ENCODE measurements at regions of chr12 and their contacts with region 1.

Region 1: GRCh38 chr12:95217377-95218149 is at the starts of genes FGD6 and VEZT:
- DNase-seq: peak; percentile 98
- ATAC-seq: peak; percentile 91
- H3K4me3 ChIP-seq: peak within 1 kb of the TSS; percentile 98
- H3K27ac ChIP-seq: peak within 1 kb of the TSS; percentile 86
- H3K4me1 ChIP-seq: no peaks in the 10 kb centered on the region
- H3K27me3 ChIP-seq: no peaks in the 10 kb centered on the region
- CTCF ChIP-seq: peak; percentile 52 to 73 (median 53); a peak in 5 of 6 replicates
- EP300 ChIP-seq: no peak
- POLR2A ChIP-seq: peak; percentile 89
- RAD21 ChIP-seq: peak; percentile 70
- polyA plus RNA-seq, gene FGD6: 2.4 to 3.3 TPM
- polyA plus RNA-seq, gene VEZT: 32.8 to 35.6 TPM

Region 2: GRCh38 chr12:95072900-95073697 is 144.5 kb before region 1 on chr12 and contains the start of gene NR2C1:
- CTCF ChIA-PET with region 1: no interaction called
- POLR2A ChIA-PET with region 1: interaction called, 4 read pairs
- RAD21 ChIA-PET with region 1: interaction called, 7 read pairs
- SMC1A ChIA-PET with region 1: interaction called, 3 read pairs
- in situ Hi-C with region 1: no loop called
- intact Hi-C with region 1: loop called (anchors 5 kb)
- DNase-seq: peak; percentile 63
- ATAC-seq: peak; percentile 98
- H3K4me3 ChIP-seq: peak within 1 kb of the TSS; percentile 88
- H3K27ac ChIP-seq: peak within 1 kb of the TSS; percentile 72
- H3K4me1 ChIP-seq: 0 out of 2 replicates have a peak, but pooled peaks cover 3% of the 10 kb centered on the region
- H3K27me3 ChIP-seq: no peaks in the 10 kb centered on the region
- CTCF ChIP-seq: no peak; a peak in 1 of 6 replicates
- EP300 ChIP-seq: no peak
- POLR2A ChIP-seq: peak; percentile 61
- RAD21 ChIP-seq: no peak
- polyA plus RNA-seq, gene NR2C1: 8.8 to 19.4 TPM

Region 3: GRCh38 chr12:95147866-95148265 is 69.7 kb before region 1 on chr12:
- CTCF ChIA-PET with region 1: interaction called, 6 read pairs
- POLR2A ChIA-PET with region 1: interaction called, 7 read pairs
- RAD21 ChIA-PET with region 1: interaction called, 12 read pairs
- SMC1A ChIA-PET with region 1: interaction called, 3 read pairs
- in situ Hi-C with region 1: no loop called
- intact Hi-C with region 1: no loop called
- DNase-seq: no peak
- ATAC-seq: peak; percentile 70
- H3K4me3 ChIP-seq: no peak overlapping the region
- H3K27ac ChIP-seq: no peak overlapping the region
- H3K4me1 ChIP-seq: no peaks in the 10 kb centered on the region
- H3K27me3 ChIP-seq: no peaks in the 10 kb centered on the region
- CTCF ChIP-seq: no peak
- EP300 ChIP-seq: no peak
- POLR2A ChIP-seq: no peak
- RAD21 ChIP-seq: no peak

Region 4: GRCh38 chr12:95231190-95231589 is 13.6 kb after region 1 on chr12:
- CTCF ChIA-PET with region 1: interaction called, 10 read pairs
- POLR2A ChIA-PET with region 1: interaction called, 5 read pairs
- RAD21 ChIA-PET with region 1: no interaction called
- SMC1A ChIA-PET with region 1: interaction called, 8 read pairs
- in situ Hi-C with region 1: no loop called
- intact Hi-C with region 1: no loop called
- DNase-seq: no peak
- ATAC-seq: peak; percentile 34; the same call in 1 of the 3 replicates
- H3K4me3 ChIP-seq: no peak overlapping the region
- H3K27ac ChIP-seq: no peak overlapping the region
- H3K4me1 ChIP-seq: no peaks in the 10 kb centered on the region
- H3K27me3 ChIP-seq: no peaks in the 10 kb centered on the region
- CTCF ChIP-seq: no peak
- EP300 ChIP-seq: no peak
- POLR2A ChIP-seq: no peak
- RAD21 ChIP-seq: no peak

Region 5: DNA sequence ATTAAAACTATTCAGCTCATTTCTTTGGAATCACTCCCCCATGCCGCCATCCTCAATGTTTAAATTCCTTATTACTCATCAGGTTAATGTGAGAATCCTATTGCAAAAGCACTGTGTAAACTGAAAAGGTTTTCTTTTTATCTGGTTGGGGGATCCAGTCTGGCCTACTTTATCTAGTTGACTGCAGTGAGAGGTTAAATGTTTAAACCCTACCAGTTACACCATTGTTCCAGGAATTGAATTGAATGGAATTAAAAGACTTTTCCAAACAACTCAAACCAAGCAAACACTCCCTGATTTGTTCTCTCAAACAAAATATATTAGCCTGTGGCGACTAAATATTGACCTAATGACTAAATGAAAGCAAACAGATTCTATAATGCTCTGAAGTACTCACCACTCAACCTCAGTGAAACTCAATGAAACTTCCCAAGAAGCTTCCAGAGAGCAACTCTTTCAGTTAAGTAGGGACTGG is 100.5 kb after region 1 on chr12:
- CTCF ChIA-PET with region 1: no interaction called
- POLR2A ChIA-PET with region 1: no interaction called
- RAD21 ChIA-PET with region 1: no interaction called
- SMC1A ChIA-PET with region 1: no interaction called
- in situ Hi-C with region 1: no loop called
- intact Hi-C with region 1: no loop called
- DNase-seq: no peak
- ATAC-seq: no peak
- H3K4me3 ChIP-seq: no peak overlapping the region
- H3K27ac ChIP-seq: no peak overlapping the region
- H3K4me1 ChIP-seq: no peaks in the 10 kb centered on the region
- H3K27me3 ChIP-seq: no peaks in the 10 kb centered on the region
- CTCF ChIP-seq: no peak
- EP300 ChIP-seq: no peak
- POLR2A ChIP-seq: no peak
- RAD21 ChIP-seq: no peak

Region 6: DNA sequence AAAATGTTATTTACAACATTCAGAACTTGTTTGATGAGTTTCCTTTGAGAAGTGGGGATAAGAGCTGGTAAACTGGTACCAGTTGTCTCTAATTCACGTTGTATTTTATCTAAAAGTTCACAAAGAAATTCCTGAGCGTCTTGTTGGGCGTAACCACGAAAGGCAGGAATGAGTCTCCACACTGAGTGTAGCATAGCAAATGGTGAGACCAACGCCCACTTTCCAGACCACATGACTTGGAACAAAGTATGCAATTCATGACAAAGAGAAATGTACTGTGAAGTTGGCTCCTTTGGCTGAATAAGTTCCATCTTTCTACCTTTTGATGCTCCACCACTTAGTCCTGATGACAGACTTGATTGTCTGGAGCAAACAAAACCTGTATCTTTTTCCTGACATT is 315.3 kb after region 1 on chr12:
- CTCF ChIA-PET with region 1: interaction called, 8 read pairs
- POLR2A ChIA-PET with region 1: no interaction called
- RAD21 ChIA-PET with region 1: interaction called, 18 read pairs
- SMC1A ChIA-PET with region 1: interaction called, 4 read pairs
- in situ Hi-C with region 1: no loop called
- intact Hi-C with region 1: no loop called
- DNase-seq: no peak
- ATAC-seq: no peak
- H3K4me3 ChIP-seq: no peak overlapping the region
- H3K27ac ChIP-seq: no peak overlapping the region
- H3K4me1 ChIP-seq: no peaks in the 10 kb centered on the region
- H3K27me3 ChIP-seq: no peaks in the 10 kb centered on the region; a peak in 1 of 4 replicates
- CTCF ChIP-seq: no peak
- EP300 ChIP-seq: no peak
- POLR2A ChIP-seq: no peak
- RAD21 ChIP-seq: no peak